Transverse colon (tissue), 4 donors: ENCODE measurements at regions of chr13 and their contacts with region 1.

Region 1: GRCh38 chr13:101903890-101904289 is 451.4 kb downstream of the ITGBL1 start:
- DNase-seq: no peak
- H3K4me3 ChIP-seq: no peak overlapping the region
- H3K27ac ChIP-seq: no peak overlapping the region
- H3K4me1 ChIP-seq: no peaks in the 10 kb centered on the region
- H3K27me3 ChIP-seq: no peaks in the 10 kb centered on the region
- CTCF ChIP-seq: no peak
- EP300 ChIP-seq: no peak
- POLR2A ChIP-seq: no peak

Region 2: GRCh38 chr13:101730420-101731000 is 173.4 kb before region 1 on chr13:
- in situ Hi-C with region 1: no loop called
- intact Hi-C with region 1: no loop called
- DNase-seq: no peak
- H3K4me3 ChIP-seq: no peak overlapping the region
- H3K27ac ChIP-seq: no peak overlapping the region
- H3K4me1 ChIP-seq: no peaks in the 10 kb centered on the region
- H3K27me3 ChIP-seq: no peaks in the 10 kb centered on the region
- CTCF ChIP-seq: no peak
- EP300 ChIP-seq: no peak
- POLR2A ChIP-seq: no peak

Region 3: DNA sequence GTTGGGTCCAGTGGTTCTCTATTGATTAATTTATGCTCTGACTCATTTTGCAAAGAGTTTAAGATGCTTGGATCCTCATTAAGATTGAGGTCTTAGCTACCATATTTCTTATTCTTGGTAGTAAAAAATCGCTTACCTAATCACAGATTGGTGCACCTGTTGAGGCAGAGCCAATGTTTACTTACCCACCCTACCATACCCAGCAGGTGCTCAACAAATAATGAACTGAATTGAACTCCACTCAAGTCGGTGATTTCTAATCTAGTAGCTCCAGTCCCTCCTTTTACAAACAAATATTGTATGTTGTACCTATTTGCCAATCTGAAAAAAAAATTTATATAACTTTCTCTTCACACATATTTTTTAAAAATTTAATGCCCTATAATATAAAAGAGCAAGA is 136.9 kb after region 1 on chr13:
- in situ Hi-C with region 1: no loop called
- intact Hi-C with region 1: loop called (anchors 5 kb)
- DNase-seq: no peak
- H3K4me3 ChIP-seq: no peak overlapping the region
- H3K27ac ChIP-seq: no peak overlapping the region
- H3K4me1 ChIP-seq: peaks cover 0 to 8% (median 0%) of the 10 kb centered on the region in 4 donors
- H3K27me3 ChIP-seq: no peaks in the 10 kb centered on the region
- CTCF ChIP-seq: no peak
- EP300 ChIP-seq: no peak
- POLR2A ChIP-seq: no peak